CD4-positive, alpha-beta T cell (primary cell): ENCODE measurements at regions of chr14 and their contacts with region 1.

Region 1: DNA sequence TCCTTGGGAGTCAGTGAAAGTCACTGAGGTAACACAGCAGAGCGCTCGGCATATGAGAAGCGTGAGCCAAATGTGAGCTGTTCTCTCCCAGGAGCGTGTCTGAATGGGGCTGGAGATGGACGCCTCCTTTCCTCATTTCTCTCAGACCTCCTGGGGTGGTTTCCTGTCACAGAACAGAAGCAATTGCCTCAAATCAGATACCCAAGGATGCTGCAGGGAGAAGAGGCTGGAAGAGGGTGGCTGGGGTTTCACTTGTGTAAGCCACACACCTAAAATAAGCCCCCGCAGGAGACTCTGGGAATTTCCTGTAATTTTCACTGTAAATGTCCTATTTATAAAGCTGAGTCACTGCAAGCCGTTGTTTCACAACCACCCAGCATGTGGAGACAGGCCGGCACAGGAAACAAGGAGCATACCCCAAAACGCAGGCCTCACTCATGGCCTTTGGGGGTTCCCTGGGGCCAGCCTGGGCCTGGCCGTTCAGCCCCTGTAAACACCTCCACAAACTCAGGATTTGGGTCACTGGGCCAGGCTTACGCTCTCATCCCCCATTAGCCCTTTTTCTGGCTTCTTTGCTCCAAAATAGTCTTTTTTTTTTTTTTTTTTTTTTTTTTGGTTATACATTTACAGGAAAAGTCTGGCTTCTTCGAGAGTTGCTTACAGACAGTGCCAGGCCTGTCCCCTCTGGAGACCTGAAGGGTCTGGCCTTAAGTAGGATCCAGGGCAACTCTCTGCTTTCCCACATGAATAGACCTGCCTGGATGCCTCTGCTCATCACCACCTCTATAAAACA is 55.3 kb downstream of the VCPKMT start:
- DNase-seq: peak in 6 of 14 experiments; percentile 17 to 79 (median 57)
- ATAC-seq: no peak
- H3K4me3 ChIP-seq: peak overlapping the region; percentile 48
- H3K4me3 Mint-ChIP-seq: peak overlapping the region; percentile 70
- H3K27ac ChIP-seq: peak overlapping the region; percentile 89 to 94
- H3K27ac Mint-ChIP-seq: peak overlapping the region; percentile 91
- H3K4me1 ChIP-seq: peaks cover 73% of the 10 kb centered on the region
- H3K4me1 Mint-ChIP-seq: peaks cover 73% of the 10 kb centered on the region
- H3K27me3 ChIP-seq: no peaks in the 10 kb centered on the region
- H3K27me3 Mint-ChIP-seq: no peaks in the 10 kb centered on the region
- CTCF ChIP-seq: no peak

Region 2: DNA sequence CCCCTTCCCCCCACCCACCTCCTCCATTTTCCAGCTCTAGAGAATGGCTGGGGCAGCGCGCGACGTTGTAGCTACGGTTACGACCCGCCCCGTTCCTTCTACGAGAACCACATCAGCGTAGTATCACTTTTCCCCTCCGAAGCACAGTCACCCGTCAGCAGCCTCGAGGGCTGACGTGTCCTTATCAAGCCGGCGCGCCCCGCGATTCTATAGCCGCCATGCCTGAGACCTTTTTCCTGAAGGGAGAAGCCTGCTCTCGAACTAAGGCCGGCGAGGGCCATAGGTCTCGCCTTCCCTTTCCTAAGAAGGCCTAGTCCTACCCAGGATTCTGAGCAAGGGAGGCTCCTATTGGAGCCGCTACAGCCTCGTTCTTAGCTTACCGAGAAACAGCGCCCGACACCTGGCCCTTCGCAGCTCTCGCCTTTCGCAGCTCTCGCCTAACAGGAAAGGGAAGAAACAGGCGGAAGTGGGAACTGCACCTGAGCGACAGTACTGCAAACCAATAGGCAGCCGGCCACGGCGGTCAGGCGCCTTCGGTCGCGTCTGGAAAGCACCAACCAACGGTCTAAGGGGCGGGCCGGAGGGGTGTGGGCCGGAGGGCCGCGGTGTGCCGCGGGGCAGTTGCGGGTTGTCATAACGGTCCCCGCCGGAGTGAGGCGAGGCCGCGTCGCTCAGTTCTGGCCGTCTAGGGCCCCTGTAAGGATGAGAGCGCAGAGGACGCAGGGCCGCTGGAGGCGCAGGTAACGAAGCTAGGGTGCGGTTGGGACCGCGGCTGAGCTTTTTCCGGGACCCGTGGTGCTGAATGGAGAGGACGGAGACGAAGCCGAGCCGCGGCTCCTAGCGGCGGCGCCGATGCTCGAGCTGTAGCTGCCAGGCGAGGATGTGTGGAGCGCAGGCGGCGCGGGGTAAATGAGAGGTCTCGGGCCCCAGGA is 440.6 kb before region 1 on chr14 and contains the starts of genes MGAT2 and RPL36AL:
- CTCF ChIA-PET with region 1: no interaction called
- POLR2A ChIA-PET with region 1: interaction called, 10 read pairs
- intact Hi-C with region 1: no loop called
- DNase-seq: peak; percentile 84 to 97 (median 91)
- ATAC-seq: peak; percentile 79
- H3K4me3 ChIP-seq: peak within 1 kb of the TSS; percentile 95
- H3K4me3 Mint-ChIP-seq: peak within 1 kb of the TSS; percentile 99
- H3K27ac ChIP-seq: peak within 1 kb of the TSS; percentile 98 to 99
- H3K27ac Mint-ChIP-seq: peak within 1 kb of the TSS; percentile 100
- H3K4me1 ChIP-seq: peaks cover 36% of the 10 kb centered on the region
- H3K4me1 Mint-ChIP-seq: peaks cover 73% of the 10 kb centered on the region
- H3K27me3 ChIP-seq: no peaks in the 10 kb centered on the region
- H3K27me3 Mint-ChIP-seq: no peaks in the 10 kb centered on the region
- CTCF ChIP-seq: peak; percentile 22
- total RNA-seq, gene MGAT2: 15.0 to 15.1 TPM
- total RNA-seq, gene RPL36AL: 339 to 370 TPM

Region 3: GRCh38 chr14:49867831-49868723 is 193.0 kb before region 1 on chr14:
- CTCF ChIA-PET with region 1: interaction called, 33 read pairs
- POLR2A ChIA-PET with region 1: interaction called, 155 read pairs
- intact Hi-C with region 1: loop called (anchors 2 to 5 kb)
- DNase-seq: peak; percentile 96 to 99 (median 98)
- ATAC-seq: peak; percentile 89
- H3K4me3 ChIP-seq: peak overlapping the region; percentile 63
- H3K4me3 Mint-ChIP-seq: peak overlapping the region; percentile 89
- H3K27ac ChIP-seq: peak overlapping the region; percentile 93
- H3K27ac Mint-ChIP-seq: peak overlapping the region; percentile 89
- H3K4me1 ChIP-seq: peaks cover 36% of the 10 kb centered on the region
- H3K4me1 Mint-ChIP-seq: peaks cover 14% of the 10 kb centered on the region
- H3K27me3 ChIP-seq: no peaks in the 10 kb centered on the region
- H3K27me3 Mint-ChIP-seq: no peaks in the 10 kb centered on the region
- CTCF ChIP-seq: no peak

Region 4: GRCh38 chr14:49946320-49947141 is 114.5 kb before region 1 on chr14:
- CTCF ChIA-PET with region 1: interaction called, 3 read pairs
- POLR2A ChIA-PET with region 1: interaction called, 21 read pairs
- intact Hi-C with region 1: no loop called
- DNase-seq: peak in 10 of 14 experiments; percentile 10 to 66 (median 26)
- ATAC-seq: peak; percentile 72
- H3K4me3 ChIP-seq: no peak overlapping the region
- H3K4me3 Mint-ChIP-seq: peak overlapping the region; percentile 56
- H3K27ac ChIP-seq: peak overlapping the region; percentile 69 to 86
- H3K27ac Mint-ChIP-seq: peak overlapping the region; percentile 88
- H3K4me1 ChIP-seq: peaks cover 66% of the 10 kb centered on the region
- H3K4me1 Mint-ChIP-seq: peaks cover 78% of the 10 kb centered on the region
- H3K27me3 ChIP-seq: no peaks in the 10 kb centered on the region
- H3K27me3 Mint-ChIP-seq: no peaks in the 10 kb centered on the region
- CTCF ChIP-seq: no peak

Region 5: DNA sequence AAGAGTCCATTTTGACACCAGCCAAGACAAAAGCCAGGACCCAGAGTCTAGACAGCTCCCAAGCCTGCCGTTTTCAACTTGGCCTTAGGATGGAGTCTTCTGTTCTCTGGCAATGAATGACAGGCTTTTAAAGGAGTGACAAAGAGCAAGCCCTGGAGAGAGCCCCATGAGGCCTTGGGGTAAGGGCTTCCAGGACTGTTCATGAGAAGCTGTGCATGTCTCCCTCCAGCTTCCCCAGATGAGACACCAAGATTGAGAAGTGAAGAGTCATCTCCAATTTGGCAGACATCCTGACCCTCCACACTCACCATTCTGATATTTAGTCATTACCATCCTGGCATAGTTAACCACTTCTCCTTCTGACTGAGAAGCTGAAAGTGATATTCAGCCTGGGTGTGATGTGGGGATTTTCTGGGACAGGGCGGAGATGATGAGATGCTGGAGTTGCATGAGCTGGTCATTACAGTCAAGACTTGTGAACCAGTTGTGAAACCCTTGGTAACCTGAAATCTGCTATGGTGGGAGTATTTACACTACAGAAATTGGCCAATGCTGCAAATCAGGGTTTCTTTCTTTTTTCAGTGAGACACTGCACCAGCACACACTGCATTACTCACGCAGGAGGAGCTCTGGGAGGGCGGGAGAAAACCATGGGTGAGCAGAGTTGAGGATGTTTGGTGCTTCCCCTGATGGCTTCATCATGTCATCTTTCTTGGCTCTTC is 22.5 kb before region 1 on chr14:
- CTCF ChIA-PET with region 1: interaction called, 4 read pairs
- POLR2A ChIA-PET with region 1: interaction called, 34 read pairs
- intact Hi-C with region 1: no loop called
- DNase-seq: peak in 7 of 14 experiments; percentile 11 to 78 (median 49)
- ATAC-seq: peak; percentile 11
- H3K4me3 ChIP-seq: no peak overlapping the region
- H3K4me3 Mint-ChIP-seq: peak overlapping the region; percentile 65
- H3K27ac ChIP-seq: peak overlapping the region; percentile 8 to 66
- H3K27ac Mint-ChIP-seq: peak overlapping the region; percentile 55
- H3K4me1 ChIP-seq: peaks cover 62% of the 10 kb centered on the region
- H3K4me1 Mint-ChIP-seq: peaks cover 56% of the 10 kb centered on the region
- H3K27me3 ChIP-seq: no peaks in the 10 kb centered on the region
- H3K27me3 Mint-ChIP-seq: no peaks in the 10 kb centered on the region
- CTCF ChIP-seq: no peak

Region 6: DNA sequence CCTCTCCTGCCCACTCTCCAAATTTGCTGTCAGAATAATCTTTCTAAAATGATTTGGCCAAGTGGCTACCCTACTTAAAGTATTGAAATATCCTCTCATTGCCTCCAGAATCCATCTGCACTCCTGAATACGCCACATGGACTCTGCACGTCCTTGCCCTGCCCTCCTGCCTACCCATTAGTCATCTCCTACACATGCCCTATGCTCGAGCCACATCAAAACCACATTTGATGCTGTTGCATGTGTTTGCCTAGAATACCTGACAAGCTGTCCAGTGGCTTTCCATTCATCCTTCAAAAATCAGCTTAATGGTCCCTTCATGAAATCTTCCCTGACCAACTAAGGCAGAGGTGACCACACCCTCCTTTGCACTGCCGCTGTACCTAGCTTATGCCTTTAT is 38.3 kb after region 1 on chr14:
- CTCF ChIA-PET with region 1: interaction called, 11 read pairs
- POLR2A ChIA-PET with region 1: interaction called, 31 read pairs
- intact Hi-C with region 1: loop called (anchors 1 to 2 kb)
- DNase-seq: peak in 1 of 14 experiments; percentile 39
- ATAC-seq: no peak
- H3K4me3 ChIP-seq: no peak overlapping the region
- H3K4me3 Mint-ChIP-seq: peak overlapping the region; percentile 12
- H3K27ac ChIP-seq: no peak overlapping the region
- H3K27ac Mint-ChIP-seq: peak overlapping the region; percentile 79
- H3K4me1 ChIP-seq: peaks cover 47% of the 10 kb centered on the region
- H3K4me1 Mint-ChIP-seq: peaks cover 64% of the 10 kb centered on the region
- H3K27me3 ChIP-seq: no peaks in the 10 kb centered on the region
- H3K27me3 Mint-ChIP-seq: no peaks in the 10 kb centered on the region
- CTCF ChIP-seq: no peak